ENCODE measurements at regions of chr17 and their contacts with region 1.

Region 1: DNA sequence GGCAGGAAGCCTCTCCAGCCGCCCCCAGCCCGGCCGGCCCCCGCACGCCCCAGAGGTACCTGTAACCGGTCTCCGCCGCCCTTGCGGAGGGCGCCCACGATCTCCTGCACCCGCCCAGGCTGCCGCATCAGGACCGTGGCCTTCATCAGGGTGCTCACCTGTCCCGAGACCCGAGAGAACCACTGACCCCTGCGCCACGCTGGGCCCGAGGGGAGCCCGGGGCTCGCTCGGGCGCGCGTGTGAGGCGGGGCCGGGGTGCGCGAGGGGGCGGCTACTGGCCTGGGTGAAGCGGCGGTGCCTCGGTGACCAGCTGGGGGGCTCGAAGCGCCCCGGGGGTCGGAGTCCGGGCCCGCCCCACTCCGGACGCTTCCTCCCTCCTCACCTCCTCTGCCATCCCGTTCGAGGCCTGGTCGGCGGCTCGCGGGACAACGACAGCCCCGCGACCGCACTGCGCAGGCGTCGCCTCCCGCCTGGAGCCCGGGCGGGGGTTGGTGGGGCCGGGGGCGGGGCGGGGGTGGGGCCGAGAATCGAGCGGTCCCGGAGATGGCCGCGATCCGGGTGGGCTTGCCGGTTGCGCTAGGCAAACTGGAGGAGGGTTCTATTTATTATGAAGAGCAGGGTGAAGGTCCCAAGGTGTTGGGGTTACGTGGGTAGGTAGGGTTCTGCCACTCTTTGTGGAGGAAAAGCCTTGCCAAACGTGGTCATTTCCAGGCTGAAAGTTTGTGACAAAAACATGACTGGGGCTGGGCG is at the start of gene NT5C3B:
- DNase-seq: peak; percentile 73 to 91
- ATAC-seq: peak; percentile 90
- H3K4me3 ChIP-seq: peak within 1 kb of the TSS; percentile 44 to 54
- H3K27ac ChIP-seq: peak within 1 kb of the TSS in 1 of 2 donors; percentile 11
- H3K4me1 ChIP-seq: no peaks in the 10 kb centered on the region
- H3K27me3 ChIP-seq: no peaks in the 10 kb centered on the region
- total RNA-seq, gene NT5C3B: 43.5 to 64.3 TPM

Region 2: DNA sequence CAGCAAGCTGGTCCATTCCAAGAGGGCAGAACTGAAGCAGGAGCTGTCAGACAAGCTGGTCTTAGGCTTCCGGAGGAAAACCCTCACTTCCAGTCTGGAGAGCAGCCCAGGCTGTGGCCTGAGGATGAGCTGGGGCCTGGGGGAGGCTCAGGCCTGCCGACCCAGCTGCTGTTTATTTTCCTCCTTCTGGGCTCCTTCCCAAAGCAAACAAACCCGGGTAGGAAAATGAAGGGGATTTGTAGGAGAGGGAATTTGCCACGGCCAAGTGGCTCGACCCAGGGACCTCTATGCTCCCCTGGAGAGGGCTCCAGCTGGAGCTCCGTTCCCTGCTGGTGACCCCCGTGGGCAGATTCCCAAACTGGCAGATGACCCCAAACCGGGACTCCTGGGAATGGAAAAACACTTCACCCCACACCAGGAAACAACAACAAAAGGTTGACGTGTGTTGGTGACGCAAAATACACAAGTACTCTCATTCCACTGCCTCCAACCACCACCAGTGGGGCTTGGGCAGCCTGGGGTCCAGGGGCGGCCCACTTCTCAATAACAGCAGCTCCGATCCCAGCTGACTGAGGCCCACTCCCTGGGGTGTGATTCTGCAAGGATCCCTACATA is 58.3 kb before region 1 on chr17:
- intact Hi-C with region 1: no loop called
- DNase-seq: peak in 1 of 2 donors; percentile 78
- ATAC-seq: peak; percentile 72
- H3K4me3 ChIP-seq: no peak overlapping the region
- H3K27ac ChIP-seq: peak overlapping the region in 1 of 2 donors; percentile 41
- H3K4me1 ChIP-seq: no peaks in the 10 kb centered on the region
- H3K27me3 ChIP-seq: no peaks in the 10 kb centered on the region

Region 3: GRCh38 chr17:41792845-41793783 is 42.9 kb before region 1 on chr17:
- intact Hi-C with region 1: no loop called
- DNase-seq: peak in 1 of 2 donors; percentile 63
- ATAC-seq: peak; percentile 71
- H3K4me3 ChIP-seq: no peak overlapping the region
- H3K27ac ChIP-seq: no peak overlapping the region
- H3K4me1 ChIP-seq: no peaks in the 10 kb centered on the region
- H3K27me3 ChIP-seq: no peaks in the 10 kb centered on the region

Region 4: GRCh38 chr17:41864836-41865595 is 29.0 kb after region 1 on chr17 and contains the start of gene KLHL11:
- intact Hi-C with region 1: loop called in 1 of 2 experiments (anchors 2 kb)
- DNase-seq: peak; percentile 92 to 96
- ATAC-seq: peak; percentile 96
- H3K4me3 ChIP-seq: peak within 1 kb of the TSS; percentile 61 to 81
- H3K27ac ChIP-seq: peak within 1 kb of the TSS; percentile 34 to 68
- H3K4me1 ChIP-seq: peaks cover 0 to 4% of the 10 kb centered on the region in 2 donors
- H3K27me3 ChIP-seq: no peaks in the 10 kb centered on the region
- total RNA-seq, gene KLHL11: 11.9 TPM

Region 5: GRCh38 chr17:41910701-41911391 is 74.9 kb after region 1 on chr17:
- intact Hi-C with region 1: no loop called
- DNase-seq: peak in 1 of 2 donors; percentile 63
- ATAC-seq: no peak
- H3K4me3 ChIP-seq: no peak overlapping the region
- H3K27ac ChIP-seq: no peak overlapping the region
- H3K4me1 ChIP-seq: no peaks in the 10 kb centered on the region
- H3K27me3 ChIP-seq: no peaks in the 10 kb centered on the region